Spleen (tissue), 13 donors: ENCODE measurements at regions of chr13 and their contacts with region 1.

Region 1: DNA sequence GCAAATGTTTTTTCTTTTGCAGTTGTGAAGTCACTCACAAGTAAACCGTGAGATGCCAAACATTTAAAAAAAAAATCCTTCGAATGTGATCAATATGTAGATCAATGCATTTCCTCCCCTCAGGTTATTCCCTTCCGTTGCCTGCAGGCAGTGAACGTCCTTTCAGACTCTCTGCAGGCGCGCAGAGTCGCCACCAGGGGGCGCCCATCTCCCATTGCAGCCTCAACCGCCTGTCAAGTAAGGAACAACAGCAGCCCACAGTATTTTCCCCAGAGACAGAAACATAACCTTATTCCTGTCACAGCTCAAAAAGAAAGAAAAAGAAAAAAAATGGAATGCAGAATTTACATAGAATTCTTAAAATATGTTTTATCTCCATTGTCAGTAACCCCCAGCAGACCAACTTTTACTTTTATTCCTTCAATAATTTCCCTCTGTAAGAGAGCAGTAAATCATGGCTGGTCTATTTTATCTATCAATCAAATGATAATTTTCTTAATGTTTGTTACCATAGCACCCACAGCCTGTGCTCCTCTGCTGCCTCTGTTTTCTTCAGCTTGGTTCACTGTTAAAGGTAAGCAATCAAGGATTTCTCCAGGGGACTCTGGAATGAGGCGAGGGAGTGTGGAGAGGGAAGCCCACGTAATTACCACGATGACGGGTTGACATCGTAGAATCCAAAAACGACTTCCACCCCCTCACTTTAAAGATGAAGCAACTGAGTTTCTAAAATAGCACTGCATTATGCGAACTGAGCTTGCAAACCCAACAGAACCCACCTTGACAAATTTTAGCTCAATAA is 637.6 kb upstream of the ARGLU1 start:
- DNase-seq: peak; percentile 87
- H3K4me3 ChIP-seq: no peak overlapping the region
- H3K27ac ChIP-seq: no peak overlapping the region
- H3K4me1 ChIP-seq: peaks cover 0 to 6% (median 0%) of the 10 kb centered on the region in 6 donors
- H3K27me3 ChIP-seq: no peaks in the 10 kb centered on the region
- CTCF ChIP-seq: peak; percentile 41 to 94 (median 87)
- POLR2A ChIP-seq: no peak

Region 2: GRCh38 chr13:107370015-107370785 is 164.7 kb after region 1 on chr13:
- intact Hi-C with region 1: no loop called
- DNase-seq: no peak
- H3K4me3 ChIP-seq: no peak overlapping the region
- H3K27ac ChIP-seq: no peak overlapping the region
- H3K4me1 ChIP-seq: no peaks in the 10 kb centered on the region
- H3K27me3 ChIP-seq: no peaks in the 10 kb centered on the region
- CTCF ChIP-seq: no peak
- POLR2A ChIP-seq: no peak

Region 3: GRCh38 chr13:108155185-108156106 is 949.9 kb after region 1 on chr13:
- intact Hi-C with region 1: loop called (anchors 5 kb)
- DNase-seq: no peak
- H3K4me3 ChIP-seq: no peak overlapping the region
- H3K27ac ChIP-seq: no peak overlapping the region
- H3K4me1 ChIP-seq: no peaks in the 10 kb centered on the region
- H3K27me3 ChIP-seq: peaks cover 0 to 7% (median 0%) of the 10 kb centered on the region in 7 donors
- CTCF ChIP-seq: peak; percentile 33 to 80 (median 66)
- POLR2A ChIP-seq: no peak